OCI-LY7 (cell line): ENCODE measurements at regions of chr12 and their contacts with region 1.

Region 1: GRCh38 chr12:45200491-45201043 is 15.3 kb upstream of the ANO6 start:
- DNase-seq: no peak
- H3K4me3 ChIP-seq: no peak overlapping the region
- H3K27ac ChIP-seq: no peak overlapping the region
- H3K4me1 ChIP-seq: peaks cover 6% of the 10 kb centered on the region
- CTCF ChIP-seq: no peak

Region 2: GRCh38 chr12:45170456-45171042 is 30.0 kb before region 1 on chr12:
- CTCF ChIA-PET with region 1: no interaction called
- POLR2A ChIA-PET with region 1: no interaction called
- intact Hi-C with region 1: no loop called
- DNase-seq: peak; percentile 70
- H3K4me3 ChIP-seq: no peak overlapping the region
- H3K27ac ChIP-seq: no peak overlapping the region
- H3K4me1 ChIP-seq: no peaks in the 10 kb centered on the region
- CTCF ChIP-seq: peak; percentile 96

Region 3: DNA sequence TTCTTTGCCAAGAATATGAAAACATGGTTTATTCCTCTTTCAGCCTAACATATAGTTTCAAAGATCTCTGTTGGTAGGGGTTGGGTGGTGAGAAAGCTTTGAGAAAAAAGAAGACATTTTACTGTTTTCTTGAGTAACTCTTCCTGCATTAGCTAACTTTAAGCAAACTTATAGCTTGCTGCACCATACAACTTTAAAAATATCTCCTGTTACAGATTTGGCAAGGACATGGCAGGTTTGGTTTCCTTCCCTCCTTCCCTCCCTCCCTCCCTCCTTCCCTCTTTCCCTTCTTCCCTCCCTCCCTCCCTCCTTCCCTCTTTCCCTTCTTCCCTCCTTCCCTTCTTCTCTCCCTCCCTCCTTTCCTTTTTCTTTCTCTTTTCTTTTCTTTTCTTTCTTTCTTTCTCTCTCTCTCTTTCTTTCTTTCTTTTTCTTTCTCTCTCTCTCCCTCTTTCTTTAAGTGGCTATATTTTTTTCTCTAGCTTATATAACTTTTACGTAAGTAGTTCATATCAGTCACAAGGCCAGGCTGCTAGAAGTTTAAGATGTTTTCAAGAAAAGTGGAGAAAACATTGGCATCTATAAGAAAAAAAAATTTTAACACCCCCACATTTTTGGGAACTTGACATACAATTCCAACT is 10.7 kb before region 1 on chr12:
- CTCF ChIA-PET with region 1: no interaction called
- POLR2A ChIA-PET with region 1: interaction called, 20 read pairs
- intact Hi-C with region 1: no loop called
- DNase-seq: no peak
- H3K4me3 ChIP-seq: no peak overlapping the region
- H3K27ac ChIP-seq: no peak overlapping the region
- H3K4me1 ChIP-seq: no peaks in the 10 kb centered on the region
- CTCF ChIP-seq: no peak

Region 4: GRCh38 chr12:45357539-45358417 is 157.2 kb after region 1 on chr12:
- CTCF ChIA-PET with region 1: no interaction called
- POLR2A ChIA-PET with region 1: no interaction called
- intact Hi-C with region 1: no loop called
- DNase-seq: no peak
- H3K4me3 ChIP-seq: no peak overlapping the region
- H3K27ac ChIP-seq: no peak overlapping the region
- H3K4me1 ChIP-seq: peaks cover 2% of the 10 kb centered on the region
- CTCF ChIP-seq: no peak